ENCODE measurements at regions of chr3 and their contacts with region 1.

Region 1: DNA sequence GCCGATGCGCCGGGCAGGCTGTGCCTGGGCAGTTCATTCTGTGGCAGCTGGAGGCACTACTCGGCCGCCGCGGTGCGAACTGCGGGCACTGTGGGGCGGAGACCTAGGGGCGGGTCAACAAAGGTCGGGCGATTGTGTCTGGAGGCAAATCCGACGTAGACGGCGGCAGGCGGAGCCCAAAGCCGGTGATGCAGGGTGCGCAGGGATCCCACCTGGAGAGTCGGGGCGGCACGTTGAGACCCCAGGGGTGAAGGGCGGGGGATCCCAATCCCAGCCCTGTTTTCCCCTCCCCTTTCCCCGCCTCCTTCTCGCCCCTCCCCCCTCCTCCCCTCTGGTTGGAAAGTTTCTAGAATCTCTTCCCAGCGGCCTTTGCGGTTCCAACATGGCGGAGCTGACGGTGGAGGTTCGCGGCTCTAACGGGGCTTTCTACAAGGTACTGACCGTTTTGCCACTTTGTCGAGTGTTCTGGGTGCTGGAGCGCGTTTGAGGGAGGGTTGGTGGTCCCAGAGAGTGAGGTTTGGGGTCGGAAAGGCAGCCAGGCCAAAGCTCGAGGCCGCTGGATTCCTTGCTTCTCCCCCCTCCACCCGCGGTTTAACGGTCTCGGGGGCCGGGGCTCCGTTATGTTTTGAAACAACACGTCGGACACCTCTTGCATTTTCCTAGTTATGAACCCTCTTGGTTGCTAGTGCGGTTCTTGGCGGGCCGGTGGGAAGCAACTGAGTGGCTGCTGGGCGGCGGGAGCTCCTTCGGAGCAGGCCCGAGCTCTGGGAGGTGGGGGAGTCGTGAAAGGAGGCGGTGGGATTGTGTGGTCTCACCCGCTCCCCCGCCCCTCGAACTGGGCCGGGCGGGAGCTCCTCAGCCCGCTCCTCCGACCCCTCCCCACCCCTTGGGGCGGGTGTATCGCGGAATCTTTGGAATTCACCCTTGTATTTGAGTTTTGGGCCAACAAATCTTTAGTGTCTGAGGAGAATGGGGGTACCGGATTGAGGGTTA is at the start of gene FXR1:
- DNase-seq: peak; percentile 46
- H3K4me3 ChIP-seq: peak within 1 kb of the TSS; percentile 96
- H3K27ac ChIP-seq: peak within 1 kb of the TSS; percentile 91
- H3K27me3 ChIP-seq: no peaks in the 10 kb centered on the region
- CTCF ChIP-seq: peak; percentile 74
- polyA plus RNA-seq, gene FXR1: 163 and 205 TPM in 2 replicates

Region 2: DNA sequence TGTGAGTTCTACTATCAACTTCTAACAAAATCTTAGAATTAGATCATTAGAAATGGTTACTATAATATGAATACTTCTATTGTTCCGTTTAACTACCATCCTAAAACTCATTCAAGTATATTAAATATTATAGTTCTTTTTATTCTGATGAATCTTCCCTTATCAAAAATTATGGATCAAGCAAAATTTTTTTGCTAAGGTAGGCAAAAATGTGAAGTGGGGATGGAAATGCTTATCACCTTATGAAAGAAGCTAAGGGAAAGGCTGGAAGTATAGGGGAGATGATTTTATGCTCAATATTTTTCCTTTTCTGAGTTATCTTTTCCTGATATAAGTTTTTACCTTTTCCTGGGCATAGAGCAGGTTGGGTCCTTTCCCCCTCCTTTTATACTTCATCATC is 192.6 kb before region 1 on chr3:
- CTCF ChIA-PET with region 1: no interaction called
- POLR2A ChIA-PET with region 1: no interaction called
- DNase-seq: no peak
- H3K4me3 ChIP-seq: no peak overlapping the region
- H3K27ac ChIP-seq: no peak overlapping the region
- H3K27me3 ChIP-seq: no peaks in the 10 kb centered on the region
- CTCF ChIP-seq: no peak

Region 3: DNA sequence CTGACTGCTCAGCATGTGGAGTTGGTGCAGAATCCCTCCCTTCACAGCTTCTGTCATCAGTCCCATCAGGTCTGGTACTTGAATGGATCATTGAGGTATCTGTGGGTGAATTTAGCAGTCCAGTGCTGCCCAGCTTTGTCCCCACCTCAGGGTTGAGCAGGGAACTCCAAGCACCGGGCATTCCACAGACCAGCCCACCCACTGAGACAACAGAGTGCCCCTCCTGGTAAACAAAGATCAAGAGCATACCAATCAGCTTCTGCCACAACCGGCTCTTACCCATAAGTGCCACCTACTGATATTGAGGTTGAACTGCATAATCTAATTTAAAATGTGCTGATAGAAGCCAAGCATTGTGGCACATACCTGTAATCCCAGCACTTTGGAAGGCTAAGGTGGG is 57.2 kb before region 1 on chr3:
- CTCF ChIA-PET with region 1: no interaction called
- POLR2A ChIA-PET with region 1: no interaction called
- DNase-seq: no peak
- H3K4me3 ChIP-seq: no peak overlapping the region
- H3K27ac ChIP-seq: no peak overlapping the region
- H3K27me3 ChIP-seq: no peaks in the 10 kb centered on the region
- CTCF ChIP-seq: peak; percentile 27

Region 4: GRCh38 chr3:180934638-180935037 is 22.0 kb after region 1 on chr3:
- CTCF ChIA-PET with region 1: interaction called, 18 read pairs
- POLR2A ChIA-PET with region 1: interaction called, 4 read pairs
- DNase-seq: no peak
- H3K4me3 ChIP-seq: no peak overlapping the region
- H3K27ac ChIP-seq: no peak overlapping the region
- H3K27me3 ChIP-seq: no peaks in the 10 kb centered on the region
- CTCF ChIP-seq: no peak